ENCODE measurements at regions of chr7 and their contacts with region 1.

Region 1: GRCh38 chr7:134547397-134548054 is 1.4 kb upstream of the AKR1B15 start:
- DNase-seq: peak; percentile 74
- ATAC-seq: peak; percentile 97
- H3K4me3 ChIP-seq: peak overlapping the region; percentile 55
- H3K27ac ChIP-seq: peak overlapping the region; percentile 6; the same call in 1 of the 2 replicates
- H3K4me1 ChIP-seq: no peaks in the 10 kb centered on the region
- H3K27me3 ChIP-seq: peaks cover 22% of the 10 kb centered on the region
- CTCF ChIP-seq: peak; percentile 76
- POLR2A ChIP-seq: no peak
- RAD21 ChIP-seq: peak; percentile 53

Region 2: DNA sequence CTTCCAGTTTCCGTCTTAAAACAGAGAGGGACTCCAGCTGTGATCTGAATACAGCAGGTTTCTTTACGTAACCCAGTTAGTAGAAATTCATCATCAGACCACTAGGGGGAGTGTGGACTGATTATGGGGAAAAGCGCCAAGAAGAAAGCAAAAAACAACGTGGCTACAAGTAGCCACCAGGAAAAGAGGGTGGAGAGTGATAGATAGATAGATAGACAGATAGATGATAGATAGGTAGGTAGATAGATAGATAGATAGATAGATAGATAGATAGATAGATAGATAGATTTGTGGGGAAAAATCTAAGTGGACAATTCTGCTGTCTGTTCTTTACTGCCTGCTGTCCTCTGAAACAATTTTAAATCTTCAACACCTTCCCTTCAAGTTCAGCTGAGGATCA is 32.9 kb before region 1 on chr7:
- CTCF ChIA-PET with region 1: interaction called, 12 read pairs
- POLR2A ChIA-PET with region 1: no interaction called
- dilution Hi-C with region 1: no loop called
- in situ Hi-C with region 1: no loop called
- intact Hi-C with region 1: loop called (anchors 1 kb)
- DNase-seq: peak; percentile 83
- ATAC-seq: peak; percentile 66
- H3K4me3 ChIP-seq: no peak overlapping the region
- H3K27ac ChIP-seq: no peak overlapping the region
- H3K4me1 ChIP-seq: peaks cover 2% of the 10 kb centered on the region; the same call in 1 of the 2 replicates
- H3K27me3 ChIP-seq: no peaks in the 10 kb centered on the region
- CTCF ChIP-seq: peak; percentile 80
- POLR2A ChIP-seq: no peak
- RAD21 ChIP-seq: peak; percentile 61

Region 3: GRCh38 chr7:134520130-134520529 is 27.4 kb before region 1 on chr7:
- CTCF ChIA-PET with region 1: interaction called, 12 read pairs
- POLR2A ChIA-PET with region 1: no interaction called
- dilution Hi-C with region 1: no loop called
- in situ Hi-C with region 1: no loop called
- intact Hi-C with region 1: loop called (anchors 2 kb)
- DNase-seq: peak; percentile 12
- ATAC-seq: peak; percentile 52
- H3K4me3 ChIP-seq: no peak overlapping the region
- H3K27ac ChIP-seq: no peak overlapping the region
- H3K4me1 ChIP-seq: peaks cover 2% of the 10 kb centered on the region; the same call in 1 of the 2 replicates
- H3K27me3 ChIP-seq: no peaks in the 10 kb centered on the region
- CTCF ChIP-seq: peak; percentile 36
- POLR2A ChIP-seq: no peak
- RAD21 ChIP-seq: no peak